ENCODE measurements at regions of chr11 and their contacts with region 1.

Region 1: GRCh38 chr11:64723117-64723906 is at the start of gene NRXN2:
- DNase-seq: peak; percentile 83
- H3K4me3 Mint-ChIP-seq: peak within 1 kb of the TSS; percentile 50
- H3K27ac Mint-ChIP-seq: peak within 1 kb of the TSS; percentile 42
- H3K4me1 Mint-ChIP-seq: peaks cover 2% of the 10 kb centered on the region
- H3K27me3 Mint-ChIP-seq: peaks cover 41% of the 10 kb centered on the region
- total RNA-seq, gene NRXN2: 0.05 TPM in 1 of 2 replicates, not detected in the other

Region 2: DNA sequence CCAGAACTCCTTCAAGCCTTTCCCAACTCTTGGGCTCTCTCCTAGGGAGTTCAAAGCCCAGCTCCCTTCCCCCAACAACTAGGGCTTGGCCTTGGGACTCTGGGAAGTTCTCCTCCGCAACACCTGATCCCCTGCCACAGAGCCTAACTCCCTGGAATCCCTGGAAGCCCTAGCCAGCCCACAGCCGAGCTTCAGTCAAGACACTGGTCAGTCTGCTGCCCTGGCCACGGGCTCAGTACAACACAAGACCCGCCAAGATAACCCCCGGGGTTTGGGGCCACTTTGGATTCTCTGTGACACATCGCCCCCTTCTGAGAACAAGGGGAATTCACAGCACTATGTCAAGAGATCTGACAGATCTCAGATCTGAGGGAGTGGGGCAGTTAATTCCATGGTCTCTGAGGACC is 74.0 kb before region 1 on chr11:
- intact Hi-C with region 1: no loop called
- DNase-seq: no peak
- H3K4me3 Mint-ChIP-seq: no peak overlapping the region
- H3K27ac Mint-ChIP-seq: no peak overlapping the region
- H3K4me1 Mint-ChIP-seq: no peaks in the 10 kb centered on the region
- H3K27me3 Mint-ChIP-seq: peaks cover 22% of the 10 kb centered on the region

Region 3: GRCh38 chr11:64688534-64688982 is 34.8 kb before region 1 on chr11:
- intact Hi-C with region 1: loop called (anchors 1 kb)
- DNase-seq: peak; percentile 83
- H3K4me3 Mint-ChIP-seq: peak overlapping the region; percentile 15
- H3K27ac Mint-ChIP-seq: no peak overlapping the region
- H3K4me1 Mint-ChIP-seq: peaks cover 15% of the 10 kb centered on the region
- H3K27me3 Mint-ChIP-seq: peaks cover 30% of the 10 kb centered on the region

Measured in activated T-helper 2 cell treated with anti-CD3 and anti-CD28 coated beads, Interferon-gamma antibody, Interleukin-2, Interleukin-4, amounts not matched to agents 10 μg/mL and 5 μg/mL and 100 μg/mL, durations not matched to agents 14 hours and 24 hours and 36 hours (primary cell).